Posterior vena cava (tissue), 2 donors: ENCODE measurements at regions of chr2 and their contacts with region 1.

Region 1: GRCh38 chr2:232781765-232782164 is 5.4 kb upstream of the KCNJ13 start:
- DNase-seq: no peak

Region 2: GRCh38 chr2:232647261-232647660 is 134.5 kb before region 1 on chr2:
- intact Hi-C with region 1: no loop called
- DNase-seq: no peak

Region 3: DNA sequence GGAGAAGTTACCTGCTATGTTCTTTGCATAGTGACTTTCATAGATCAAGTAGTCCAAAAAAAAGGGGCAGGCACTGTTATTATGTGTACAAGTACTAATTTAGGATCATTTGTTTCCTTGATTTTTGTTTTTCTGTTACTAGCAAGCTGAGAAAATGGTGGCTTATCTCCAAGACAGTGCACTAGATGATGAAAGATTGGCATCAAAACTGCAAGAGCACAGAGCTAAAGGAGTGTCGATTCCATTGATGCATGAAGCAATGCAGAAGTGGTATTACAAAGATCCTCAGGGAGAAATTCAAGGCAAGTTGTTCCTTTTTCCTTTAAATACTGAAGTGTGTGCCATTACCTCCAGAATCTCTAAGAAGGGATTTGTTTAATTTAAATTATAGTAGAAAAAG is 14.2 kb after region 1 on chr2:
- intact Hi-C with region 1: loop called in 1 of 2 experiments (anchors 1 kb)
- DNase-seq: no peak

Region 4: DNA sequence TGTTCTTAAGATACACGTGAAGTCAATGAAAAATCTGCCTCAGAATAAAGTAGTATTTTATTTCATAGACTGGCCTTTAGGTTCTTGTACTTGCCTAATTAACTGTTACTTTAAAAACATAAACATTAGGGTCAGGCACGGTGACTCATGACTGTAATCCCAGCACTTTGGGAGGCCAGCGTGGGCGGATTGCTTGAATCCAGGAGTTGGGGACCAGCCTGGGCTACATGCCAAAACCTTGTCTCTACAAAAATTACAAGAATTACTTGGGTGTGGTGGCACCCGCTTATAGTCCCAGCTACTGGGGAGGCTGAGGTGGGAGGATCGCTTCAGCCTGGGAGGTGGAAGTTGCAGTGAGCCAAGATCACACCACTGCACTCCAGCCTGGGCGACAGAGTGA is 72.3 kb after region 1 on chr2:
- intact Hi-C with region 1: no loop called
- DNase-seq: no peak

Region 5: DNA sequence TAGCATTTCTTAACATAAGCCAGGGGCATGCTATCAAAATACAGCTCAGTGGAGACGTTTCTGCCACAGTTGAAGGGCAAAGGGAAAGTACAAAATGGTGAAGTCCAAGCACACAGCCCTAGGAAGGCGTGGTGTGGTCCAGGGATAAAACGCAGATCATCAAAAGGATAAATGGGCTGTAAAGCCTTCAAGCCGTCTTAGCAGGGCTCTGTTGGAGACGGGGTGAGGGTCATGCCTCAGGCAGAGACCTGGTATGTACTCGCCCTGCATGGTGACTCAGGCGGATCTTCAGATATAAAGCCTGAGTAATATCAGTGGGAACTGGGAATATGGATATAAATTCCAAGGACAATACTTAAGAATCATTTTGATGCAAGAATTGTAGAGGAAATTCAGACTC is 170.1 kb after region 1 on chr2:
- intact Hi-C with region 1: no loop called
- DNase-seq: no peak